ENCODE measurements at regions of chr5 and their contacts with region 1.

Region 1: GRCh38 chr5:32613050-32613672 is 27.8 kb downstream of the SUB1 start:
- DNase-seq: no peak
- H3K4me3 ChIP-seq: no peak overlapping the region
- H3K27me3 ChIP-seq: no peaks in the 10 kb centered on the region
- CTCF ChIP-seq: peak; percentile 89

Region 2: DNA sequence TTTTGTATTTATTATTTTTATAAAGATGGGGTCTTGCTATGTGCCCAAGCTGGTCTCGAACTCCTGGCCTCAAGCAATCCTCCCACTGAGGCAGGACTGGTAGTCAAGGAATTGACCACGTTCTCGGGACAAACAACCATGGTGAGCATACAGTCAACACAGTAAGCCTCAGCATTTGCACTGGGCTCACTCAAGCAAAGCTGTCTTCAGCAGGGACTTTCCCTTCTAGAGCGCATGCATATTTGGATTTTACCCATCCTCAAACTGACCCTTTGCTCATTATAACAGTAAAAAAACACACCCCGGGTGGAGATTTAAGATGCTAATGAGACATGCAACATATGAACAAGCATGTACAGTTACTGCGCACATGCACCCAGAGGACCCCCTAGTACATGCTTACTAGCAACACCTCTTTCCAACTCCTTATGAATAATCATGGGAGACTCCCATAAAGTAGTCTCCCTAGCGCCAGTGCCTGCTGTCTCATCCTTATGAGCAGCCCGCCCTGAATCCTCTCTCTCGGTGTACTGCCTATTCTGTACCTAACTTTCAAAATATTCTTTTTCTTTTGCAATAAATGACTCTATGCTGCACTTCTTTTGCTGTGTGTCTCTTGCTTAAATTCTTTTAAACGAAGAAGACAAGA is 1039.5 kb before region 1 on chr5:
- CTCF ChIA-PET with region 1: no interaction called
- POLR2A ChIA-PET with region 1: no interaction called
- DNase-seq: no peak
- H3K4me3 ChIP-seq: no peak overlapping the region
- H3K27me3 ChIP-seq: no peaks in the 10 kb centered on the region
- CTCF ChIP-seq: no peak

Region 3: DNA sequence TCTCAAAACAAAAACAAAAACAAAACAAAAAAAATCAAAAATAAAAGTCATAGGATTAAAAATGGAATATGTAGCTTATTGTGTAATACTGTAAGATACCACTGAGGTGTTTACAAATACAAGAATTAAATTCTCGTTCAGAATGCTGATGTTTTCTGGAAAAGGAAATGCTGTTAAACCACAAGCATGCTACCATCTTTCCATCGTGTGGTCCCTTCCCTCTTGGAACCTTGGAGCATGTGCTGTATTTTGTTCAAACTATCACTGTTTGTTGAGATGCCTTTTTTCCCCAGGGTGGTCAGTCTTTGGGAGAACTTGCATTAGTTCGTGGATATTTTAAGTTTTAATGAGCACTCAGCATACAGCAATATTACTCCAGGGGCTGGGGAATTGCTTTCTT is 11.9 kb after region 1 on chr5:
- CTCF ChIA-PET with region 1: interaction called, 11 read pairs
- POLR2A ChIA-PET with region 1: no interaction called
- DNase-seq: no peak
- H3K4me3 ChIP-seq: no peak overlapping the region
- H3K27me3 ChIP-seq: no peaks in the 10 kb centered on the region; the same call in 1 of the 2 replicates
- CTCF ChIP-seq: no peak

Region 4: DNA sequence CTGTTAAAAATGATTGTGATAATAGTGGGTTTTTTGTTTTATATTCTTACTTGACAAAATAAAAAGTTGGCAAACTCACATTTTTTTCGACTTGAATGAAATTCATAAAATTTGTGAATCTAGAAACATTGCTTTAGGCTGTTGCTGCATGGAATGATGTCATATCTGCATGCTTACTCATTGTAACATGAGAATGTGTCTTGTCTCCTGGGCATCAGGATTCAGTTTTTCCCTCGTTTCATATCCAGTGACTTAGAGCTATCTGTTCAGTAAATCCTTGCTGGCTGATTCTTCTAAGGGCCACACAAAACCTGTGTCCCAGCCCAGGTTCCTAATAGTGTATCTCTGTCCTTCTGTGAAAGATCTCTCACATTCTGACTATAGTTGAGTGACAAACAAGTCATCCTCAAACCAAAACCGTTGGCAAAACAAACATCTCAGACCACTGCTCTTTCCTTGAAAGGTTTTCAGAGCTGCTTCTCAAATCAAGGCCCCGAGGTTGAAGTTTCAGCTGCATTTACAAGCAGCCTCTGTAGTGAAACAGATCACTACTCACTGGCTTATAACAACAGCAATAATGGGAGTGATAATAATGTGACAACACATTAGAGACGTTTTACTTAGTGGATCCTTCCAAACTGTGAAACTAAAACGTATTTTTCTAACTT is 192.9 kb after region 1 on chr5:
- CTCF ChIA-PET with region 1: no interaction called
- POLR2A ChIA-PET with region 1: interaction called, 10 read pairs
- DNase-seq: peak; percentile 78
- H3K4me3 ChIP-seq: no peak overlapping the region
- H3K27me3 ChIP-seq: no peaks in the 10 kb centered on the region
- CTCF ChIP-seq: no peak